ENCODE measurements at regions of chr6 and their contacts with region 1.

Region 1: DNA sequence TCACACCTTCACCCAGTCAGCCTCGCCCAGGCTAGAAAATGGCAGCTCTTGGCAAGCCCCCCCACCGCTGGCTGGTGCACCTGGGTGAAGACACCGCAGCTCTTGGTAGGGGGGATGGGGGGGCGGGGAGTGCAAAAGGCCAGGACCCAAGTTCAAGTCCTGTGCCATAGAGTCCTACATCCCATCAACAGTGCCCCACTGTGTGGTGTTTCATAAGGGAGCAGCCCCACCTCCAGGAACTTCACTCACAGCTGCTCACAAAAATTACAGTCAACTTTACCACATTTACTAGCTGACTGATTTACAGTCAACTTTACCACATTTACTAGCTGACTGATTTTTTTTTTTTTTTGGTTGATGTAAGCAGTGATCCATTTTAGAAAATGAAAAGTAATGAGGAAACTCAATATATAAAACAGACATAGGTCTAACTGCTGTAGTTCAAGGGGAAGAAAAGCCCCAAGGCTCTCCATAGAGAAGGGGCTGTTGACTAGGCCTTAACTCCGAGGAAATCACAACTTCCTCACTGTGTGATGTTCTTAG is 208.9 kb upstream of the SNX9 start:
- DNase-seq: no peak
- H3K4me3 ChIP-seq: no peak overlapping the region
- H3K27ac ChIP-seq: peak overlapping the region in 1 of 2 experiments; percentile 80; a peak in 2 of 4 replicates
- H3K4me1 ChIP-seq: no peaks in the 10 kb centered on the region
- H3K27me3 ChIP-seq: no peaks in the 10 kb centered on the region
- CTCF ChIP-seq: no peak
- EP300 ChIP-seq: no peak
- RAD21 ChIP-seq: no peak

Region 2: DNA sequence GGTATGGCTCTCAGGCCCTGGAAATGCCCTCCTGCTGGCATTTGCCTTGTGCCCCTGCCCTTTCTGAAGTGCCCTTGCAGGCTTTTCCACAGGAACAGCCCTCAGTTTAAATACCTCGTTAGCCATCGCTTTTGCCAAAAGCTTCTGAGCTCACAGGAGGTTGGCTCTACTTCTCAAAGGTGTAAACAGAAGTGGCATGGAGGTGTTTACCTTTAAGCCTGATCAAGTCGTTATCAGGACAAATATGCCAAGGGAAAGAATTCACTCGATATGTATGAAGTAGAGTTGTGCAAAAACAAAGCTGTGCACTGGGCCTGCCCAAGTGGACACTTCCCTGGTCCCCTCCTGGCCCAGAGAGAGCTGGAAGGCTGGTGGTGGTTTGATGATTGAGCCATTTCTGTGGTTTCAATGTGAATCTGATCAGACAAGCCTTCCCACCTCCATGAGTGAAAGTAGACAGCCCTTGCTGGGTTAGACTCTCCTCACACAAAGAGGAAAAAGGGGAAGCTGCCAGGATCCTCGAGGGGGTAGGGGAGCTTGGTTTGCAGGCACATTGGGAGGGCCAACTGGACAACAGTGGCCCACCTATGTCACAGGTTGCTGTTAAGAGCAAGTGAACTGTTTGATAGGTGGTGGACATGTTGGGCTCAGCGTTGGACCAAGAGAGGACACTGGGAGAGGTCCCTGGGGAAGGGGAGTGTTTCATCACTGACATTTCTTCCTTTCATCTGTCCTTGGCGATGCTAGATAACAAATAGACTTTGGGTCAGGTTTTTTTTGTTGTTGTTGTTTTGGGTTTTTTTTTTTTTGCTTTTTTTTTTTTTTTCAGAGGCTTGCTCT is 134.4 kb before region 1 on chr6:
- CTCF ChIA-PET with region 1: no interaction called
- POLR2A ChIA-PET with region 1: no interaction called
- DNase-seq: no peak
- H3K4me3 ChIP-seq: no peak overlapping the region
- H3K27ac ChIP-seq: no peak overlapping the region
- H3K4me1 ChIP-seq: no peaks in the 10 kb centered on the region
- H3K27me3 ChIP-seq: no peaks in the 10 kb centered on the region
- CTCF ChIP-seq: no peak
- EP300 ChIP-seq: no peak
- RAD21 ChIP-seq: no peak

Region 3: GRCh38 chr6:157548635-157549467 is 65.2 kb before region 1 on chr6:
- CTCF ChIA-PET with region 1: no interaction called
- POLR2A ChIA-PET with region 1: no interaction called
- DNase-seq: no peak
- H3K4me3 ChIP-seq: no peak overlapping the region
- H3K27ac ChIP-seq: no peak overlapping the region
- H3K4me1 ChIP-seq: no peaks in the 10 kb centered on the region; a peak in 1 of 4 replicates
- H3K27me3 ChIP-seq: no peaks in the 10 kb centered on the region
- CTCF ChIP-seq: no peak
- EP300 ChIP-seq: no peak
- RAD21 ChIP-seq: no peak

Region 4: GRCh38 chr6:157625764-157626163 is 11.7 kb after region 1 on chr6:
- CTCF ChIA-PET with region 1: interaction called, 10 read pairs
- POLR2A ChIA-PET with region 1: no interaction called
- DNase-seq: no peak
- H3K4me3 ChIP-seq: no peak overlapping the region
- H3K27ac ChIP-seq: no peak overlapping the region
- H3K4me1 ChIP-seq: no peaks in the 10 kb centered on the region
- H3K27me3 ChIP-seq: no peaks in the 10 kb centered on the region
- CTCF ChIP-seq: no peak
- EP300 ChIP-seq: no peak
- RAD21 ChIP-seq: no peak